Dorsolateral prefrontal cortex (tissue), 120 donors: ENCODE measurements at regions of chr9 and their contacts with region 1.

Region 1: DNA sequence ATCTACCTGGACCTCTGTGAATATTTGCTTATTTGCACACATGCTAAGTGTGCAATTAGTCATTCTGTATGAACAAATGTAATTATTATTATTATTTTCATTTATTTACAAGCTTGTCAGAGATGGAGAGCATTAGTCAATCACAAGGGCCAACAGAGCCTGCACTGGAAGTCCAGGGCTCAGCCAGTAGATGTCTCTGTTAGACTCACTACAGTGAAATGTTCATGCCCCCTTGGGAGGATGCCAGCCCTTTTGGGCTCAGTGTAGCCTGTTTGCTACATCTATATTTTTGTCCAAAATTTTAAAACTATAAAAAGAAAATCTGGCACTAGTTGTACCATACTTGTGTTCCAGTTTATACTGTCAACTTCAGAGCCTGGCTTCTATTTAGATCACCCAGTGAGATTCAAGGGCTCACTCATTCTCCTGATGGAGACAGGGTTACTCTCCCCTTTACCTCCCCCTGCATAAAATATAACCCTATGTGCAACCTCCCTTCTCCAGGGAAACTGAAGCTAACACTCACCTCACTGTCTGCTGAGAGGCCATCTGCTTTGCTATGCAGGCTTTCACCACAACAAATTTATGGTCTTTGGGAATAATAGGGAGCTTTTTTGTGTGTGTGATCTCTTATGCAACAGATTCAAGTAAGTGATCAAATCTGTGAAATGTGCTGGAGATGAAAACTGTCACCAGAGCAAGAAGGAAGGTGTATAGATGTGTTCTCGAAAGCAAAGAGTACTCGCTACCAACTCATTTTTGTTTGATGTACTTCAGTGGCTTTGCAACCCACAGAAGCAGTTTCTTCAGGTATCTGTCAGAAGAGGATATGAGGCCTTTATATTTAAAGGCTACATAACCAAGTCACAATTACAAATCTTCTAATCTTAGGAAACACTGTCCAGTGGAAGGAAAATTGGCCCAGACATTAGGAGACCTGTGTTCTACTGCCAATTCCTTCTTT is 99.9 kb upstream of the TLE4 start:
- DNase-seq: peak; percentile 54 to 94 (median 76)
- H3K4me3 ChIP-seq: no peak overlapping the region
- H3K27ac ChIP-seq: peak overlapping the region in 3 of 59 donors; percentile 9 to 63 (median 23)
- H3K27me3 ChIP-seq: no peaks in the 10 kb centered on the region
- CTCF ChIP-seq: peak; percentile 21 to 85 (median 64)

Region 2: DNA sequence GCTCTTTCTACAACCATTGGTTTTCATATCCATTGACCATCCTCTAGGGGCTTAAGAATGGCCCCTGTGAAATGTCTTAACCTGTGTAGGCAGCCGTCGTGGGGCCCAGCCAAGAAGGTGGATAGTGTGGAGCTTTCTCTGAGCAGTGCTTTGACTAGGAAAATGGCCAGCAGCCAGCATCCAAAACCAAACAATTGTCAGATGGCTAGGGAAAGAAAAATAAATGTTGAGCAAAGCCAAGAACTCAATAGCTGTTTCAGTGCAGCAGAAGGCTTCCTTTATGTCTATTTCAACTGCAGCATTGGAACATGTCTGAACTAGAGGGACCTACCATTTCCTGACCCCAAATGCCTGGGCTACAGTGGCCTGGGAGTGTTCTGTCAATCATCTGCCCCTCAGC is 474.9 kb after region 1 on chr9:
- intact Hi-C with region 1: loop called in 1 of 2 experiments (anchors 5 kb)
- DNase-seq: peak in 2 of 10 donors; percentile 31 to 59
- H3K4me3 ChIP-seq: no peak overlapping the region
- H3K27ac ChIP-seq: no peak overlapping the region
- H3K27me3 ChIP-seq: no peaks in the 10 kb centered on the region
- CTCF ChIP-seq: no peak